ENCODE measurements at regions of chr20 and their contacts with region 1.

Region 1: DNA sequence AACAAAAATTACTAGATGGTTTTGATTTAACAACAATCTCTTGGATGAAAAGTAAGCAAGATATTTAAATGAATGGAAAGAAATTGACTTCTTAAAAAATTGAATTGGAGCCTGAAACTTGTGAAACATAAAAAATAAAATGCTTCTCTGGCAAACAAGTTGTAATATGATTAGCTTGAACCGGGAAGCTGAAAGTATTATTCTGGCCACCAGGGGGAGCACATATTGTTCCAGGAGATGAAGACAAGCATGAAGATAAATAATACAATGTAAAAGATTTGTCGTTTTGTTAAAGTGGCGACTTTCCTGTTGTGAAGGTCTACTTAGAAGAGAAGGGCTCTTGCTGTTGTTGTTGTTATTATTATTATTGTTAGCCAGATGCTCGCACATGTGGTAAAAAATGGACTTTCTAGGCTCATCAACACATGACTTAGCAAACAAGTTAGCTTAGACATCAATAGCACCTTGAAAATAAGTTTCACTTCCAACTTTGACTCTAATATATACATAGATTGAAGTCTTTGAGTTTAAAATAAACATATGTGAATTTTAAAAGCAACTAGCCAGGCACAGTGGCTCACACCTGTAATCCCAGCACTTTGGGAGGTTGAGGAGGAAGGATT is 14.2 kb downstream of the PAX1 start:
- DNase-seq: no peak
- ATAC-seq: peak in 1 of 4 donors; percentile 66
- H3K4me3 ChIP-seq: no peak overlapping the region
- H3K27ac ChIP-seq: no peak overlapping the region
- H3K4me1 ChIP-seq: no peaks in the 10 kb centered on the region
- H3K27me3 ChIP-seq: peaks cover 0 to 24% (median 5%) of the 10 kb centered on the region in 3 donors
- CTCF ChIP-seq: peak; percentile 66

Region 2: DNA sequence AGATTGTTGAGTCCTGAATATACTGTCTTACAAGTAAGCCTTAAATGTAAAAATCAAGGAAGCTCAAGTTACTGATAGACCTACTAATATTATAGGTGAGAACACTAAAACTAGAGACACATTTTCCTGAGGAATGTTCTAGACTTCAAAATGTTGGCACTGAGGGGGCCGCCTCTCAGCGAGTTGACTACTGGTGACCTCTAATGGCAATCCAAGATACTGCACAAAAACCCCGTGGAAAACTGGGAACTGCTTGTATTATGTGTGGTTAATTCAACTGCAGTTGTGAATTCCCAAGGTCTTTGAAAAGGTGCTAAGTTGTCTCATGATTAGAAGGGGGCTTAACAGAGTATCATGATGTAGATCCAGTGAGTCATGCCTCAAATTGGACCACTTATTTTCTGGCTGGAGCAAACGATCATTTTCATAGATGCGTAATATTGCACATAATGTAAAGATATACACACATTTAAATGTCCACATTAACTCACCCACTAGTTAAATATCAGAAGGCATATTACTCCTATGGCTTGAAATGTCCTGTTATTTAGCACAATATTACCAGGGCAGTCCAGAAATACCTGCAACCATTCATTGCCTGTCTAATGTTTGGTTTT is 528.5 kb after region 1 on chr20:
- intact Hi-C with region 1: loop called in 1 of 2 experiments (anchors 10 kb)
- DNase-seq: no peak
- ATAC-seq: no peak
- H3K4me3 ChIP-seq: no peak overlapping the region
- H3K27ac ChIP-seq: no peak overlapping the region
- H3K4me1 ChIP-seq: no peaks in the 10 kb centered on the region
- H3K27me3 ChIP-seq: no peaks in the 10 kb centered on the region
- CTCF ChIP-seq: peak; percentile 23

Region 3: GRCh38 chr20:22312744-22313346 is 593.1 kb after region 1 on chr20:
- intact Hi-C with region 1: loop called (anchors 10 kb)
- DNase-seq: no peak
- ATAC-seq: no peak
- H3K4me3 ChIP-seq: no peak overlapping the region
- H3K27ac ChIP-seq: no peak overlapping the region
- H3K4me1 ChIP-seq: no peaks in the 10 kb centered on the region
- H3K27me3 ChIP-seq: no peaks in the 10 kb centered on the region
- CTCF ChIP-seq: peak; percentile 50